Activated CD8-positive, alpha-beta T cell treated with anti-CD3 and anti-CD28 coated beads for 36 hours (primary cell): ENCODE measurements at regions of chr6 and their contacts with region 1.

Region 1: DNA sequence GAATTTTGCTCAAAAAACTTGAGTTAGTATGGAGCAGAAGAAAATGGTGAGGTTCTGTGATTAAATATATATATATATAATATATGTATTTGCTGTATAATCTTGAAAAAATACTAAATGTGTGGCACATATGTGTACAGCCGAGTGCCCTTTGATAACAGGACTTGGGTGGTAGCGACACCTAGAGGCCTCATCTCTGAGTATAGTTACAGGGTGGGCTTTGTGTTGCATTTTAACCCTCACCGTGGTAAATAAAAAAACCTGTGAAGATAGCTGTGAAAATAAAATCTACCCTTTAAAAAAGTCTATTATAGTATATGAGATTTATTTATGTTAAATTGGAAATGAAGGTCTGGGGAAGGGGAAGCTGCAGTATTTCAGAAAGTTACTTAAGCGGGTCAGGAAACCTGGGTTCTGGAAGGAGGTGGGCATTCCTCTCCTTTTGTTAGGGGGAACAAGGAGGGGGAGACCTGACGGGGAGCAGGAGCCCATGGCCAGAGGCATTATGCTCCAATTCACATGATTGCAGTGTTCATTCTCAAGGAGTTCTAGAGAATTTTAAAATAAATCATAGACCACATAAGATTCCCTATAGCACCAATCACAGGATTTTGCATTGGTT is 82.7 kb downstream of the SH3BGRL2 start:
- DNase-seq: peak; percentile 73
- ATAC-seq: peak; percentile 61
- H3K4me3 Mint-ChIP-seq: no peak overlapping the region
- H3K27ac Mint-ChIP-seq: no peak overlapping the region
- H3K4me1 Mint-ChIP-seq: no peaks in the 10 kb centered on the region
- H3K27me3 Mint-ChIP-seq: peaks cover 3% of the 10 kb centered on the region
- CTCF ChIP-seq: peak; percentile 78

Region 2: DNA sequence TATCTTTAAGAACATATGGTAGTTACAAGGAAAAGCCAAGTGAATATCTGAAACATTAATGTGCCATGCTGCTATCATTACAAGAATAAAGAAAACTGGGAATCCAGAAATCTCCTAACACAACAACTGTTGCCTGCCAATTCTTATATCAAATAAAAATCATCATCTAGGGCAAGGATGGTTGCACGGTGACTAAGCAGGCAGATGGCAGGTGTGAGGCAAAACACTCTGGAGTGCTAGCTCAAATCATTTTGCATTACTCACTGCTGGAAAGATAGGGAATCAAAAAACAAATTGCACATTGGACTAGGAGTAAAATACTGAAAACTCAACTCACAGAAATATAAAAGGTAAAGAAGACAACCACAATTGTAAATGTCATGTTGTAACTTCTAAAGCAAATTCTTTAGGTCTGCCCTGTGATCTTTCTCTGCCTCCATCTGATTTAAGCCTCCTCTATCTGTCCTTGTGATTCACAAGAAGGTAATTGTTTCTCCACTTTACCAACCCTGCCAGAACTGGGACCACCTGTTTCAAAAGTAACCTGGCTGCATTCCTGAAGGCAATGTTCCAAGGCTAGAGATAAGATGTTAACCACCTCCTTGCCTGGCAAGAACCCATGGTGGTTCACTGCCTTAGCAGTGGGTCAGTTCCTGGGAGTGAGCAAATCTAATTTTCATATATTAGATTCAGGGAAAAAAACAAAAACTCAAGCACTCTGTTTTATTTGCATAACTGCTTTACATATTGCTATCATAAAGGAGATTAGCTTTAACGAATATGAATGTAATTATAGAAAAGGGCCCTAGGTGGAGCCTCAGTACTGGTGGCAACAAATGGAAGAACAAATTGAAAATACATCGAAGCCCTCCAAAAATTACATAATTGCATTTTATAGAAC is 143.4 kb before region 1 on chr6:
- CTCF ChIA-PET with region 1: interaction called, 8 read pairs
- POLR2A ChIA-PET with region 1: no interaction called
- intact Hi-C with region 1: loop called (anchors 5 kb)
- DNase-seq: no peak
- ATAC-seq: no peak
- H3K4me3 Mint-ChIP-seq: no peak overlapping the region
- H3K27ac Mint-ChIP-seq: no peak overlapping the region
- H3K4me1 Mint-ChIP-seq: no peaks in the 10 kb centered on the region
- H3K27me3 Mint-ChIP-seq: no peaks in the 10 kb centered on the region
- CTCF ChIP-seq: peak; percentile 74

Region 3: GRCh38 chr6:79821859-79822258 is 108.0 kb after region 1 on chr6:
- CTCF ChIA-PET with region 1: no interaction called
- POLR2A ChIA-PET with region 1: no interaction called
- intact Hi-C with region 1: no loop called
- DNase-seq: no peak
- ATAC-seq: no peak
- H3K4me3 Mint-ChIP-seq: no peak overlapping the region
- H3K27ac Mint-ChIP-seq: no peak overlapping the region
- H3K4me1 Mint-ChIP-seq: no peaks in the 10 kb centered on the region
- H3K27me3 Mint-ChIP-seq: peaks cover 1% of the 10 kb centered on the region
- CTCF ChIP-seq: no peak